Common myeloid progenitor, CD34-positive (primary cell): ENCODE measurements at regions of chr1 and their contacts with region 1.

Region 1: GRCh38 chr1:45018599-45019230 is 6.7 kb downstream of the UROD start:
- DNase-seq: peak; percentile 62 to 78 (median 71)
- H3K4me3 ChIP-seq: no peak overlapping the region
- H3K27ac ChIP-seq: no peak overlapping the region
- H3K4me1 ChIP-seq: peaks cover 6 to 40% (median 19%) of the 10 kb centered on the region in 4 experiments
- H3K27me3 ChIP-seq: no peaks in the 10 kb centered on the region

Region 2: GRCh38 chr1:44976252-44976651 is 42.5 kb before region 1 on chr1:
- CTCF ChIA-PET with region 1: no interaction called
- POLR2A ChIA-PET with region 1: no interaction called
- DNase-seq: no peak
- H3K4me3 ChIP-seq: no peak overlapping the region
- H3K27ac ChIP-seq: no peak overlapping the region
- H3K4me1 ChIP-seq: no peaks in the 10 kb centered on the region
- H3K27me3 ChIP-seq: no peaks in the 10 kb centered on the region

Region 3: DNA sequence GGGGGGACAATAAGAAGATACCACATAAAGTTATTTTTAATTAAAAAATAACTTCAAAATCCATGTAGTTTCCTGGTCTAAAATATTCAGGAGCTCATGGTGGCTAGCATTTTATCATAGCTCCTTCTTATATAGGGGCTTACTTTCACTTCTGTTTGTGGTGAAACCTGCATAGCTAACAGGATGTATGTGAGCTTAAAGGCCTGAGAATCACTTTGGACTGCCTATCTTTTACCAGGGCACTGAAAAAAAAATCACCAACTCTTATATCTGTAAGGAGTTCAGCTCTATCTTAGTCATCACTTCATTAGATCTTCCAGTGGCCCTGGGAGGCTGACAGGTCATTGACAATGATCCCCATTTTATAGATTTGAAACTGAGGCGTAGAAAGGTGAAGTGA is 14.6 kb after region 1 on chr1:
- CTCF ChIA-PET with region 1: interaction called, 12 read pairs
- POLR2A ChIA-PET with region 1: no interaction called
- DNase-seq: peak in 2 of 3 donors; percentile 71 to 80
- H3K4me3 ChIP-seq: no peak overlapping the region
- H3K27ac ChIP-seq: no peak overlapping the region
- H3K4me1 ChIP-seq: peaks cover 0 to 2% (median under 1%) of the 10 kb centered on the region in 4 experiments
- H3K27me3 ChIP-seq: no peaks in the 10 kb centered on the region

Region 4: GRCh38 chr1:45079533-45079932 is 60.8 kb after region 1 on chr1:
- CTCF ChIA-PET with region 1: no interaction called
- POLR2A ChIA-PET with region 1: no interaction called
- DNase-seq: no peak
- H3K4me3 ChIP-seq: no peak overlapping the region
- H3K27ac ChIP-seq: no peak overlapping the region
- H3K4me1 ChIP-seq: no peaks in the 10 kb centered on the region
- H3K27me3 ChIP-seq: no peaks in the 10 kb centered on the region

Region 5: GRCh38 chr1:45103534-45103933 is 84.8 kb after region 1 on chr1:
- CTCF ChIA-PET with region 1: no interaction called
- POLR2A ChIA-PET with region 1: no interaction called
- DNase-seq: no peak
- H3K4me3 ChIP-seq: no peak overlapping the region
- H3K27ac ChIP-seq: no peak overlapping the region
- H3K4me1 ChIP-seq: no peaks in the 10 kb centered on the region
- H3K27me3 ChIP-seq: no peaks in the 10 kb centered on the region

Region 6: GRCh38 chr1:45200906-45201500 is 182.3 kb after region 1 on chr1:
- CTCF ChIA-PET with region 1: no interaction called
- POLR2A ChIA-PET with region 1: no interaction called
- DNase-seq: no peak
- H3K4me3 ChIP-seq: no peak overlapping the region
- H3K27ac ChIP-seq: no peak overlapping the region
- H3K4me1 ChIP-seq: peaks cover 0 to 7% (median 5%) of the 10 kb centered on the region in 4 experiments
- H3K27me3 ChIP-seq: peaks cover 0 to 6% (median 0%) of the 10 kb centered on the region in 5 experiments